Sigmoid colon (tissue), 7 donors: ENCODE measurements at regions of chrX and their contacts with region 1.

Region 1: DNA sequence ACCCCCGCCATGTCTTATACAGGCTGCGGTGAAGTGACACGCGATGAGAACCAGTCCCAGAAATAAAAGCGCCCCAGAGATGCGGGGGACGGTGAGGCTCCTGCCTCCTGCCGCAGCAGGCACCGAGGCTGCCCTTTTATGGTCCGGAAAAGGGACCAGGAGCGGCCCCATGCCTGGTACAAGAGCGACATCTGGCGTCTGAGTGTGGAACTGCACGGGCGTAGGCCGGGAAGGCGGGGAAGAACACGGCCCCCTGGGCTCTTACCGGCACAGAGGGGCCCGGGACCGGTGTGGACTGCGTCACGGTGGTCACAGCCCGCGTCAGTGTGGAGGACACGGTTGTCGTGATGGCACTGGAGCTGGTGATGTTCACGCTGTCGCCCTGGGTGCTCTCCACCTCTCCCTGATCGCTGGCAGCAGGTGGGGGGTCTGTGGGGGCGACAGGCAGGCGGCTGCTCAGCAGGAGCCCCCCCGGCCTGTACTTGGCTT is 8.9 kb upstream of the RENBP start:
- DNase-seq: peak; percentile 93
- H3K4me3 ChIP-seq: peak overlapping the region; percentile 18 to 44 (median 38)
- H3K27ac ChIP-seq: peak overlapping the region; percentile 81 to 87 (median 86)
- H3K4me1 ChIP-seq: peaks cover 0 to 72% (median 48%) of the 10 kb centered on the region in 4 donors
- H3K27me3 ChIP-seq: no peaks in the 10 kb centered on the region
- CTCF ChIP-seq: peak; percentile 92 to 99 (median 97)
- EP300 ChIP-seq: peak in 1 of 4 donors; percentile 12
- POLR2A ChIP-seq: peak in 1 of 2 donors; percentile 54

Region 2: DNA sequence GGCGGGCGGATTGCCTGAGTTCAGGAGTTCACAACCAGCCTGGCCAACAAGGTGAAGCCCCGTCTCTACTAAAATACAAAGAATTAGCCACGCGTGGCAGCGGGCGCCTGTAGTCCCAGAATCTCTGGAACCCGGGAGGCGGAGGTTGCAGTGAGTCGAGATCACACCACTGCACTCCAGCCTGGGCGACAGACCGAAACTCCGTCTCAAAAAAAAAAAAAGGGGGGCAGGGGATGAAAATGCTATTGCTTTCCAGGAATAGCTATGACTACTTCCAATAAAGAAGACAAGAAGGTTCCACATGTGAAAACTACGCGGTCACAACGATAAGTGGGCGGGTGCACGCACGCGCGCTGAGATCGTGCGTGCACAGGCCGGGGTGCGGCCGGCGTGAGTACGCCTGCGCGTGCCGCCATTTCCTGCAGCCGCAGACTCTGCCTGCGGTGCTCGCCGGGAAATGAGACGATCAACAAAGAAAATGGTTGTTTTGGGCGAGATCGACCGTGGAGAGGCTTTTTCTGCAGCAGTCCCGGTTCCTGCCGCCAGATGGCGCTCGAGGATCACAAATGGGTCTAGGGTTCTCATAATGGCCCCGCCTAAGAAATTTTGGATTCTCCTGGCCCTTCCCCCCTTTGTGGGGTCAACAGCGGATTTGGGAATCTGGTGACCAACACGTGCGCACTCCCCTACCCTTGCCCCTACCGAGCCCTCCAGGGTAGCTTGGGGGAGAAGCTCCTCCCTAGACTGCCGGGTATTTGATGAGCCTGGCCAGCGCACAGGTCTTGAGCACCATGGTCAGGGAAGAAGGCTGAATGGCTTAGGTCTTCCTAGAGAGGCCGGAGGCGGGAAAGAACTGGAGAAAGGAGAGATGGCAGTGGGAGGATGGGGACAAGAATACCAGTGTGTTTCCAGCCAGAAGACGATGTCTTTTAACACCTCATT is 994.6 kb before region 1 on chrX:
- intact Hi-C with region 1: loop called (anchors 2 kb)
- DNase-seq: peak; percentile 94
- H3K4me3 ChIP-seq: peak overlapping the region; percentile 7 to 42 (median 28)
- H3K27ac ChIP-seq: peak overlapping the region; percentile 64 to 77 (median 72)
- H3K4me1 ChIP-seq: no peaks in the 10 kb centered on the region
- H3K27me3 ChIP-seq: peaks cover 0 to 3% (median 0%) of the 10 kb centered on the region in 3 donors
- CTCF ChIP-seq: peak; percentile 65 to 92 (median 74)
- EP300 ChIP-seq: peak in 1 of 4 donors; percentile 25
- POLR2A ChIP-seq: no peak

Region 3: GRCh38 chrX:153539171-153539978 is 414.0 kb before region 1 on chrX:
- intact Hi-C with region 1: loop called (anchors 2 kb)
- DNase-seq: peak; percentile 81
- H3K4me3 ChIP-seq: no peak overlapping the region
- H3K27ac ChIP-seq: no peak overlapping the region
- H3K4me1 ChIP-seq: no peaks in the 10 kb centered on the region
- H3K27me3 ChIP-seq: peaks cover 0 to 2% (median 0%) of the 10 kb centered on the region in 3 donors
- CTCF ChIP-seq: peak; percentile 34 to 69 (median 66)
- EP300 ChIP-seq: no peak
- POLR2A ChIP-seq: no peak

Region 4: GRCh38 chrX:153763989-153764755 is 189.2 kb before region 1 on chrX and contains the start of gene PLXNB3:
- intact Hi-C with region 1: loop called (anchors 2 kb)
- DNase-seq: peak; percentile 92
- H3K4me3 ChIP-seq: peak within 1 kb of the TSS; percentile 14 to 51 (median 46)
- H3K27ac ChIP-seq: peak within 1 kb of the TSS; percentile 75 to 86 (median 82)
- H3K4me1 ChIP-seq: peaks cover 0 to 34% (median 16%) of the 10 kb centered on the region in 4 donors
- H3K27me3 ChIP-seq: no peaks in the 10 kb centered on the region
- CTCF ChIP-seq: peak; percentile 56 to 91 (median 66)
- EP300 ChIP-seq: no peak
- POLR2A ChIP-seq: peak in 1 of 2 donors; percentile 22
- total RNA-seq, gene PLXNB3: 9.2 to 50.1 (median 25.7) TPM